H1 (cell line): ENCODE measurements at regions of chr22 and their contacts with region 1.

Region 1: DNA sequence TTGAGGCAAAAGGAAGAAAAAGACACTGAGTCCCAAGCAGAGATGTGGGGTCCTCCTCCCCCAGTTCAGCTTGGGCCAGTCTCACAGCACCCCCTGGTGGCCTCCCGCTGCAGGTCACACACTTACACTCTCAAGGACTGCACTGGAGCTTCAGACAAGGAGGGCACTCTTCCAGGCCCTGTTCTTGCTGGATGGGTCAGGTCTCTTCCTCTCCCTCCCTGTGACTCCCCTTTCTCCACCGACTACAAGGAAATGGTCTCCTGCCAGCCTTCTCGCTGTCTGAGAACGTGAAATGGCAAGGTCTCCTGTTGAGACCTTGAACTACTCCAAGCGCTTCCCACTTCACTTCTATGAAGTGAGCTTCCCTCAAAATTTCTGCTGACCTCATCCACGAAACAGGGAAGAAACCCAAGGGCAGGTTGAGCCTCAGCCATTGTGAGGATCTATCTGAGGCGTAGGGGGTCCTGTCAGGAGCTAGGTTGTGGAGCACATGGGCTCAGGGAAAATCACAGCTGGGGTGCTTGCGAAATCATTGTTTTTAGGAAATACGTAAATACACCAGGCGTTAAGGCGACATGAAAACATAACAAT is 11.2 kb upstream of the IGLL1 start:
- DNase-seq: peak; percentile 78 to 93
- H3K4me3 ChIP-seq: no peak overlapping the region
- H3K27ac ChIP-seq: no peak overlapping the region
- H3K4me1 ChIP-seq: peaks cover 0 to 6% (median 4%) of the 10 kb centered on the region in 4 experiments; a peak in 4 of 7 replicates
- H3K27me3 ChIP-seq: no peaks in the 10 kb centered on the region; a peak in 1 of 7 replicates
- CTCF ChIP-seq: peak; percentile 95 to 98 (median 96)
- EP300 ChIP-seq: no peak
- POLR2A ChIP-seq: no peak
- RAD21 ChIP-seq: peak; percentile 97 to 98

Region 2: DNA sequence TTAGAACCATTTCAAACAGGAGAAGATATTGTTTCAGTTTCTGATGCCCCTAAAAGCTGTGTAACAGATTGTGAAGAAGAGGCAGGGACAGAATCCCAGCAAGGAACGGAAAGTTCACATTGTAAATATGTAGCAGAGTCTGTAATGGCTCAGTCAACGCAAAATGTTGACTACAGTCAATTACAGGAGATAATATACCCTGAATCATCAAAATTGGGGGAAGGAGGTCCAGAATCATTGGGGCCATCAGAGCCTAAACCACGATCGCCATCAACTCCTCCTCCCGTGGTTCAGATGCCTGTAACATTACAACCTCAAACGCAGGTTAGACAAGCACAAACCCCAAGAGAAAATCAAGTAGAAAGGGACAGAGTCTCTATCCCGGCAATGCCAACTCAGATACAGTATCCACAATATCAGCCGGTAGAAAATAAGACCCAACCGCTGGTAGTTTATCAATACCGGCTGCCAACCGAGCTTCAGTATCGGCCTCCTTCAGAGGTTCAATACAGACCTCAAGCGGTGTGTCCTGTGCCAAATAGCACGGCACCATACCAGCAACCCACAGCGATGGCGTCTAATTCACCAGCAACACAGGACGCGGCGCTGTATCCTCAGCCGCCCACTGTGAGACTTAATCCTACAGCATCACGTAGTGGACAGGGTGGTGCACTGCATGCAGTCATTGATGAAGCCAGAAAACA is 52.0 kb before region 1 on chr22:
- CTCF ChIA-PET with region 1: interaction called, 23 read pairs
- POLR2A ChIA-PET with region 1: no interaction called
- DNase-seq: peak; percentile 56 to 82
- H3K4me3 ChIP-seq: no peak overlapping the region
- H3K27ac ChIP-seq: no peak overlapping the region
- H3K4me1 ChIP-seq: peaks cover 20 to 34% (median 23%) of the 10 kb centered on the region in 4 experiments
- H3K27me3 ChIP-seq: peaks cover 0 to 7% (median 4%) of the 10 kb centered on the region in 4 experiments; a peak in 4 of 7 replicates
- CTCF ChIP-seq: peak; percentile 88 to 98 (median 90)
- EP300 ChIP-seq: no peak
- POLR2A ChIP-seq: no peak
- RAD21 ChIP-seq: peak; percentile 86 to 91

Region 3: GRCh38 chr22:23565288-23565941 is 25.9 kb before region 1 on chr22:
- CTCF ChIA-PET with region 1: interaction called, 17 read pairs
- POLR2A ChIA-PET with region 1: no interaction called
- DNase-seq: peak in 1 of 2 experiments; percentile 76
- H3K4me3 ChIP-seq: peak overlapping the region; percentile 37 to 89 (median 45)
- H3K27ac ChIP-seq: no peak overlapping the region
- H3K4me1 ChIP-seq: peaks cover 0 to 14% (median 10%) of the 10 kb centered on the region in 4 experiments; a peak in 6 of 7 replicates
- H3K27me3 ChIP-seq: peaks cover 4 to 39% (median 25%) of the 10 kb centered on the region in 4 experiments
- CTCF ChIP-seq: peak in 2 of 3 experiments; percentile 39 to 46; a peak in 3 of 4 replicates
- EP300 ChIP-seq: no peak
- POLR2A ChIP-seq: no peak
- RAD21 ChIP-seq: no peak; a peak in 1 of 4 replicates

Region 4: DNA sequence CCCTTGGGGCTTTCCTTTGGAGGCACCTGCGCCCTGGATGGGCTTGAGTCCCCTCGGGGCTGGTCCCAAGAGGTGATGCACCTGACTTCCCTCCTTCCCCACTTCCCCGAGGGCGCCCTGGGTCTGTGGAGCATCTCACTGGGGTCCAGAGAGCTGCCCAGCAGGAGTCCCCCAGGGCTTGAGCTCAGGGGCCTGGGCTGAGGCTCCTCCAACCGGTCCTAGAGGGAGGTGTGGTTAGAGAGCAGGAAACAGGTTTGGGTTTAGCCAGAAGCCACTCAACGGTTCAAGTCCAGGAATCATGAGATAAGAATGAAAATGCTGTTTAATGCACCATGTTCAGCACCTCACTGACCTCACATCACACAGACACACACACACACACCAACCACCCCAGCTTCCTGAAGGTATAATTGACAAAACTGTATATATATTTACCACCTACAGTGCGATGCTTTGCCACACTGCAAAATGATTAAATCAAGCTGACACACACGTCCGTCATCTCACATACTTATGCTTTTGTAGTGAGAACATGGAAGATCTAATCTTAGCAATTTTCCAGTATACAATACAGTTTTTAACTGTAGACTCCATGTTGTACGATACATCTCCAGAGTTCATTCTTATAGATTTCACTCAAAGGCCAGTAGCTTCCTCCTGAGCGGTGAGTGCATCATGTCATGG is 10.6 kb before region 1 on chr22:
- CTCF ChIA-PET with region 1: interaction called, 19 read pairs
- POLR2A ChIA-PET with region 1: no interaction called
- DNase-seq: no peak
- H3K4me3 ChIP-seq: no peak overlapping the region
- H3K27ac ChIP-seq: no peak overlapping the region
- H3K4me1 ChIP-seq: no peaks in the 10 kb centered on the region; a peak in 1 of 7 replicates
- H3K27me3 ChIP-seq: no peaks in the 10 kb centered on the region
- CTCF ChIP-seq: no peak
- EP300 ChIP-seq: no peak
- POLR2A ChIP-seq: no peak
- RAD21 ChIP-seq: no peak

Region 5: DNA sequence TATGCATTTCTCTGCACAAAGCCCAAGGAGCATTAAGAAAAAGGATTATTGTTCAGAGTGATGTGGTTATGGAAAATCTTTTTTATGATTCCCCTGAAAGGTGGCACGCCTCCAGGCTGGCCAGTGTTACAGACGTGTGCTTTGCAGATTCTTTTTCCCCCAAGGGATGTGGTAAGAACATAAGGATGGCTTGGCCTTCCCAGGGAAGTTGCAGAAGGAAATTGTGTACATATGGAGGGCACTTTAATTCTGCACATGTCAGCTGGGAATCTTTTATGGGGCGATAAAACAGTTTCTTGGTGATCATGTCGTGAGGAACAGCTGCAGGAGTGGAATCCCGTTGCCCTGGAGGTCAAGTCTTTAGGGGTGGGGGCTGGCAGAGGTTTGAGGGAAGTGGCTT is 205.2 kb after region 1 on chr22:
- CTCF ChIA-PET with region 1: no interaction called
- POLR2A ChIA-PET with region 1: no interaction called
- DNase-seq: no peak
- H3K4me3 ChIP-seq: no peak overlapping the region
- H3K27ac ChIP-seq: no peak overlapping the region
- H3K4me1 ChIP-seq: no peaks in the 10 kb centered on the region
- H3K27me3 ChIP-seq: no peaks in the 10 kb centered on the region
- CTCF ChIP-seq: no peak
- EP300 ChIP-seq: no peak
- POLR2A ChIP-seq: no peak
- RAD21 ChIP-seq: no peak

Region 6: GRCh38 chr22:23868580-23868979 is 277.3 kb after region 1 on chr22:
- CTCF ChIA-PET with region 1: no interaction called
- POLR2A ChIA-PET with region 1: no interaction called
- DNase-seq: no peak
- H3K4me3 ChIP-seq: no peak overlapping the region
- H3K27ac ChIP-seq: no peak overlapping the region
- H3K4me1 ChIP-seq: no peaks in the 10 kb centered on the region
- H3K27me3 ChIP-seq: no peaks in the 10 kb centered on the region
- CTCF ChIP-seq: no peak
- EP300 ChIP-seq: no peak
- POLR2A ChIP-seq: no peak
- RAD21 ChIP-seq: no peak